ENCODE measurements at regions of chr3 and their contacts with region 1.

Region 1: GRCh38 chr3:21752749-21753347 is 1.8 kb upstream of the ZNF385D start:
- DNase-seq: no peak
- ATAC-seq: peak; percentile 25
- H3K4me3 Mint-ChIP-seq: no peak overlapping the region
- H3K27ac Mint-ChIP-seq: no peak overlapping the region
- H3K4me1 Mint-ChIP-seq: peaks cover 33% of the 10 kb centered on the region
- H3K27me3 Mint-ChIP-seq: peaks cover 5% of the 10 kb centered on the region
- CTCF ChIP-seq: 0 out of 2 replicates have a peak, but pooled peaks have one; percentile 30

Region 2: GRCh38 chr3:21894459-21895340 is 141.9 kb after region 1 on chr3:
- CTCF ChIA-PET with region 1: interaction called, 25 read pairs
- POLR2A ChIA-PET with region 1: no interaction called
- DNase-seq: no peak
- ATAC-seq: peak; percentile 24; the same call in 1 of the 2 replicates
- H3K4me3 Mint-ChIP-seq: no peak overlapping the region
- H3K27ac Mint-ChIP-seq: no peak overlapping the region
- H3K4me1 Mint-ChIP-seq: peaks cover 4% of the 10 kb centered on the region; the same call in 1 of the 2 replicates
- H3K27me3 Mint-ChIP-seq: no peaks in the 10 kb centered on the region
- CTCF ChIP-seq: peak; percentile 48

Measured in WTC11 (cell line).